ENCODE measurements at regions of chr14 and their contacts with region 1.

Region 1: GRCh38 chr14:21748869-21749303 is 75.3 kb upstream of the OR4E1 start:
- H3K4me3 ChIP-seq: no peak overlapping the region
- H3K27ac ChIP-seq: no peak overlapping the region
- H3K4me1 ChIP-seq: no peaks in the 10 kb centered on the region
- CTCF ChIP-seq: peak; percentile 49

Region 2: DNA sequence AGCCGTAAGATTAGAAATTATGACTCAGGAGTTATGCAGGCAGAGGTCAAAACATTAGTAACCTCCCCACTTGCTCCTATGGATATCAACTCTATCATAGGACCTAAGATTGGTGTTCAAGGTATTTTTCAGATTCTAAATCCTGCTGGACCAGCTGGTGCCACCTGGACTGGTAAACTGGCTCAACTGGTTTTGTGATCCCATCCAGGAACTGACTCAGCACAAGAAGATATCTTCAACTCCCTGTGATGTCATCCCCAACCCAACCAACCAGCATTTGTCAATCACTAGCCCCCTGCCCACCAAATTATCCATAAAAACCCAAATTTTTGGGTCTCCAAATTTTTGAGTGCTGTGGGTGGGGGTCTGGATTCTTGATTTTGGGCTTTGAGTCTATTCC is 22.8 kb after region 1 on chr14:
- CTCF ChIA-PET with region 1: interaction called, 12 read pairs
- POLR2A ChIA-PET with region 1: no interaction called
- H3K4me3 ChIP-seq: no peak overlapping the region
- H3K27ac ChIP-seq: no peak overlapping the region
- H3K4me1 ChIP-seq: no peaks in the 10 kb centered on the region
- CTCF ChIP-seq: no peak

Region 3: GRCh38 chr14:21802441-21802840 is 53.6 kb after region 1 on chr14:
- CTCF ChIA-PET with region 1: no interaction called
- POLR2A ChIA-PET with region 1: no interaction called
- H3K4me3 ChIP-seq: no peak overlapping the region
- H3K27ac ChIP-seq: no peak overlapping the region
- H3K4me1 ChIP-seq: no peaks in the 10 kb centered on the region
- CTCF ChIP-seq: no peak